ENCODE measurements at regions of chr6 and their contacts with region 1.

Region 1: GRCh38 chr6:89122625-89123024 is 4.8 kb upstream of the SRSF12 start:
- DNase-seq: no peak
- ATAC-seq: peak; percentile 87
- H3K4me3 ChIP-seq: no peak overlapping the region
- H3K27ac ChIP-seq: no peak overlapping the region
- H3K4me1 ChIP-seq: no peaks in the 10 kb centered on the region
- H3K27me3 ChIP-seq: peaks cover 0 to 4% of the 10 kb centered on the region in 2 experiments; a peak in 1 of 4 replicates
- CTCF ChIP-seq: peak; percentile 50 to 78 (median 52); a peak in 5 of 6 replicates
- EP300 ChIP-seq: no peak
- POLR2A ChIP-seq: no peak
- RAD21 ChIP-seq: peak; percentile 87

Region 2: GRCh38 chr6:89145787-89146646 is 23.4 kb after region 1 on chr6 and contains the start of gene PM20D2:
- CTCF ChIA-PET with region 1: interaction called, 13 read pairs
- POLR2A ChIA-PET with region 1: no interaction called
- RAD21 ChIA-PET with region 1: no interaction called
- SMC1A ChIA-PET with region 1: interaction called, 3 read pairs
- in situ Hi-C with region 1: no loop called
- intact Hi-C with region 1: no loop called
- DNase-seq: no peak
- ATAC-seq: peak; percentile 84
- H3K4me3 ChIP-seq: peak within 1 kb of the TSS; percentile 71
- H3K27ac ChIP-seq: peak within 1 kb of the TSS; percentile 75
- H3K4me1 ChIP-seq: peaks cover 16% of the 10 kb centered on the region
- H3K27me3 ChIP-seq: no peaks in the 10 kb centered on the region
- CTCF ChIP-seq: no peak
- EP300 ChIP-seq: no peak
- POLR2A ChIP-seq: peak; percentile 86
- RAD21 ChIP-seq: no peak
- polyA plus RNA-seq, gene PM20D2: 7.8 to 8.3 TPM

Region 3: DNA sequence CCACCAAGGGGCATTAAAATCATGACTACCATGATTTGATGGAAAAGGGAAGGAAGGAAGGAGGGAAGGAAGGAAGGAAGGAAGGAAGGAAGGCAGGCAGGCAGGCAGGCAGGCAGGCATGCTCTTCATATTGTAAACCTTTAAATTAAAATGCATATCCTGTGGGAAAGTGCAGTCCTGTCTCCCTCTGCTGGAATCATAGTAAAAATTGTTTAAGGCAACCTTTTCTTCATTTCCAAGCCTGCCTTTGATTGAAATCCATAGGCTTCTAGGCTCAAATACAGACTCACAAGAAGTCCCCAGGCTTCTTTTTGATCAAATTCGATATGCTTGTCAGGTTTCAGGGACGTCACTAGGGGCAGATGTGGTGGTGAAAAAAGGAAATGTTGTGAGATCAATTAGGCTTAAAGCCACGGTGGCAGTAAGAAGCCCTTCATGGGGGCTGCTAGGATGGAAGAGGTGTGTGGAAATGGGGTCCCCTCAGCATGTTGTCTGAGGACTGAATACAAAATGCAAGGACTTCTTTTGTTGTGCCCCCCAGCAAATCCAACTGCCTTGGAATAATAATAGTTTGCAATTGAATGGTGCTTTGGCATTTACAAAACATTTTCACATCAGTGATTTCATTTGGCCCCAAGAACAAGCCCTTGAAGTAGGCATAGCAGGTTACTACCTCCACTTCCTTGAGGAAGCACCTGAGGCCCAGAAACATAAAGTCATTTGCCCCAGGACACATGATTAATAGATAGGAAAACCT is 120.1 kb after region 1 on chr6:
- CTCF ChIA-PET with region 1: interaction called, 10 read pairs
- POLR2A ChIA-PET with region 1: no interaction called
- RAD21 ChIA-PET with region 1: no interaction called
- SMC1A ChIA-PET with region 1: interaction called, 6 read pairs
- in situ Hi-C with region 1: no loop called
- intact Hi-C with region 1: loop called (anchors 2 kb)
- DNase-seq: no peak
- ATAC-seq: peak; percentile 70
- H3K4me3 ChIP-seq: no peak overlapping the region
- H3K27ac ChIP-seq: no peak overlapping the region
- H3K4me1 ChIP-seq: peaks cover 14% of the 10 kb centered on the region
- H3K27me3 ChIP-seq: no peaks in the 10 kb centered on the region
- CTCF ChIP-seq: peak; percentile 23 to 59 (median 31); a peak in 4 of 6 replicates
- EP300 ChIP-seq: no peak
- POLR2A ChIP-seq: no peak
- RAD21 ChIP-seq: peak; percentile 68